ENCODE measurements at regions of chrX and their contacts with region 1.

Region 1: GRCh38 chrX:41010188-41010846 is 74.9 kb upstream of the USP9X start:
- DNase-seq: peak; percentile 52
- H3K4me3 Mint-ChIP-seq: peak overlapping the region; percentile 55
- H3K27ac Mint-ChIP-seq: peak overlapping the region; percentile 78
- H3K4me1 Mint-ChIP-seq: peaks cover 22% of the 10 kb centered on the region
- H3K27me3 Mint-ChIP-seq: peaks cover 15% of the 10 kb centered on the region

Region 2: DNA sequence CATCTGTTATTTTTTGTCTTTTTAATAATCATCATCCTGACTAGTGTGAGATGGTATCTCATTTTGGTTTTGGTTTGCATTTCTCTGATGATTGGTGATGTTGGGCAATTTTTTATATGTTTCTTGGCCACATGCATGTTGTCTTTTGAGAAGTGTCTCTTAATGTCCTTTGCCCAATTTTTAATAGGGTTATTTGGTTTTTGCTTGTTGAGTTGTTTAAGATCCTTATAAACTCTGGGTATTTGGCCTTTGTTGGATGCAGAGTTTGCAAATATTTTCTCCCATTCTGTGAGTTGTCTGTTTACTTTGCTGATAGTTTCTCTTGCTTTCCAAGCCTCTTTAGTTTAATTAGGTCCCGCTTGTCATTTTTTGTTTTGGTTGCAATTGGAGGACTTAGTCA is 122.8 kb before region 1 on chrX:
- intact Hi-C with region 1: loop called (anchors 10 kb)
- DNase-seq: no peak
- H3K4me3 Mint-ChIP-seq: no peak overlapping the region
- H3K27ac Mint-ChIP-seq: no peak overlapping the region
- H3K4me1 Mint-ChIP-seq: peaks cover 6% of the 10 kb centered on the region
- H3K27me3 Mint-ChIP-seq: peaks cover 1% of the 10 kb centered on the region

Region 3: GRCh38 chrX:41084044-41084892 is 74.0 kb after region 1 on chrX:
- intact Hi-C with region 1: loop called (anchors 10 kb)
- DNase-seq: peak; percentile 88
- H3K4me3 Mint-ChIP-seq: peak overlapping the region; percentile 89
- H3K27ac Mint-ChIP-seq: peak overlapping the region; percentile 99
- H3K4me1 Mint-ChIP-seq: peaks cover 18% of the 10 kb centered on the region
- H3K27me3 Mint-ChIP-seq: no peaks in the 10 kb centered on the region

Region 4: DNA sequence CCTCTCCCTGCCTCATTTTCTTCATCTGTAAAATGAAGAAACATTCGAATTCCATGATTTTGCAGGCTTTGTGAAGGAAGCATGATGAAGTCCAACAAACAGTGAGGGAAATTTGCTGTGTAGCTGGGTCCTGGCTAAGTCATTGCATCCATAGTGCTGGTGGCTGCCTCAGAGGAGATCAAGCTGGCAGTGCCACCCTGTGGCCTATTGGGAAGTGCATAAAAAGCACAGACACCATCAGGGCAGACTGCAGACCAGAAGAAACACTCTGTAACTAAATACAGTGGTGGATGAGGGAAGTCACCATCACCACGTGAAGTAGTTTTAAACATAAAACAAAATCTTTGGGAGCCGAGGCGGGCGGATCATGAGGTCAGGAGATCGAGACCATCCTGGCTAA is 283.0 kb after region 1 on chrX:
- intact Hi-C with region 1: no loop called
- DNase-seq: no peak
- H3K4me3 Mint-ChIP-seq: no peak overlapping the region
- H3K27ac Mint-ChIP-seq: no peak overlapping the region
- H3K4me1 Mint-ChIP-seq: no peaks in the 10 kb centered on the region
- H3K27me3 Mint-ChIP-seq: no peaks in the 10 kb centered on the region

Measured in activated T-helper 2 cell treated with anti-CD3 and anti-CD28 coated beads, Interferon-gamma antibody, Interleukin-2, Interleukin-4, amounts not matched to agents 10 μg/mL and 5 μg/mL and 100 μg/mL, durations not matched to agents 14 hours and 24 hours and 36 hours (primary cell).